ENCODE measurements at regions of chr7 and their contacts with region 1.

Region 1: GRCh38 chr7:97104719-97105238 is 12.7 kb upstream of the SDHAF3 start:
- DNase-seq: peak; percentile 50 to 76
- H3K4me3 ChIP-seq: no peak overlapping the region
- H3K27ac ChIP-seq: no peak overlapping the region
- H3K4me1 ChIP-seq: no peaks in the 10 kb centered on the region
- H3K27me3 ChIP-seq: no peaks in the 10 kb centered on the region
- CTCF ChIP-seq: peak; percentile 24 to 73 (median 51)
- POLR2A ChIP-seq: no peak

Region 2: GRCh38 chr7:97187067-97187466 is 82.3 kb after region 1 on chr7:
- intact Hi-C with region 1: loop called (anchors 5 kb)
- DNase-seq: no peak
- H3K4me3 ChIP-seq: no peak overlapping the region
- H3K27ac ChIP-seq: no peak overlapping the region
- H3K4me1 ChIP-seq: no peaks in the 10 kb centered on the region
- H3K27me3 ChIP-seq: no peaks in the 10 kb centered on the region
- CTCF ChIP-seq: no peak
- POLR2A ChIP-seq: no peak